Head of caudate nucleus (tissue), 42 donors: ENCODE measurements at regions of chr13 and their contacts with region 1.

Region 1: DNA sequence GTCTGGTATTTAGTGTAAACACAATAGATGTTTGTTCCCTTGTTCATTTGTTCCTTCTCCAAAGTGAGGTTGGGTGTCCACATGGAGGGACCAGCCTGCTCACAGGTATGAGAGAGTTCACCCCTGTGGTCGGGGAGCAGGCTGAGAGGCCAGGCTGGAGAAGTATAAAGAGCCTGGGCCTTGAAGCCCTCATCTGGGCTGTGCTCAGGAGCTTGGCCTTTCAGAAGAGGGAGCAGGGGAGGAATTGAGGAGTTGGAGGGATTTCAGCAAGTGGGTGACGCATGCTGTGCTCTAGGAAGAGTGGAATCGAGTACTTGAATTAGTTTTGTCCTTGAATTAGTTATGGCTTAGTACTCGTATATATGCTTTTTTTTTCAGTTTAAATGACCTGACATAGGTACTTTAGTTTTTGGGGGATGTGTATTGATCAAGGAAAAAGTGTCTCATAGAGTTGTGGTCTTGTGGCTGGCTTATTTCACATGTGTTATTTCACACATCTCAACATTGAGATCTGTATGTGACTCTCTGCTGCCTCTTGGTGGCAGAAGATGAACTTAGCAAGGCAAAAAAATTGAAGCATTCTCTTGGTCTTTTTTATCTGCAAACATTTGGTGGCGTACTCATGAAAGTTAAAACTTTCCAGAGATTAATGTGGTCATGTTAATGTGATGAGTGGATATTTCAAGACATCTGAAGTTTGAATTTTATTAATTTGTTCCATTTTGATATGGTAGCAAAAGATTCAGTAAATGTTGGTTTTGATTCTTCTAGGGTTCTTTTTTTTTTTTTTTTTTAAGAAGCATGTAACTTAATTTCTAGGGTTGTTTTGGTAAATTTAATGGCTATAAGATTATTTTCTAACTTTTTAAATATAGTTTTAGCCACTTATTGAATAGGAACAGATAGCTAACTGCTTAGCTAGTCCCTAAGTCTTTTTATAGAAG is 54.3 kb downstream of the SLAIN1 start:
- DNase-seq: peak in 23 of 42 donors; percentile 41 to 86 (median 63)

Region 2: DNA sequence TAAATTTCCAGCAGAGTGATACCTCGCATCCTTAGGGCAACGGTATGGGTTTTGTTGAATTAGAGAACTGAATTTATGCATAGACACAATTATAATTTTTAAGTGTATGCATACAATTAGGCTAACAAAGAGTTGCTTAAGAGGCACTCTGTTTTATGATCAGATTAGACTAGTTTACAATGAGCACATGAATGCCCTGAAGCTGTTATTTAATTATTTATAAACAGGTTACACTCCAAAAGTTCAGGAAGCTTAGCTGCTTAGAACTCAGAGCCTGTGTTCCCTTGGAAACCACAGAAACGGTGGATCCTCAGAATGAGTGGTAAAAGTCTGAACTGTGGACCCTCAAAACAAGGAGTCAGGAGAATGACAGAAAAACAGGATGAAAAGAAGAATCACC is 652.4 kb before region 1 on chr13:
- intact Hi-C with region 1: no loop called
- DNase-seq: no peak

Region 3: DNA sequence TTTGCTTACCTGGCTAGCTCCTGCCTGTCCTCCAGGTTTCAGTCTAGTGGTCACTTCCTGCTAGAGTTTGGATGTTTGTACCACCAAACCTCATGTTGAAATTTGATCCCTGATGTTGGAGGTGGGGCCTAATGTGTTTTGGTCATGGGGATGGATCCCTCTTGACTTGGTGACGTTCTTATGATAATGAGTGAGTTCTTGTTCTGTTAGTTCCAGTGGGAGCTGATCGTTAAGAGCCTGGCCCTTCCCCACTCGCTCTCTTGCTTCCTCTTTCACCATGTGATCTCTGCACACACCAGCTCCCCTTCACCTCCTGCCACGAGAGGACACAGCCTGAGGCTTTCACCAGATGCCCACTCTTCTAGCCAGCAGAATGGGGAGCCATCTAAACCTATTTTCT is 303.1 kb before region 1 on chr13:
- intact Hi-C with region 1: no loop called
- DNase-seq: peak in 24 of 42 donors; percentile 3 to 45 (median 14)

Region 4: DNA sequence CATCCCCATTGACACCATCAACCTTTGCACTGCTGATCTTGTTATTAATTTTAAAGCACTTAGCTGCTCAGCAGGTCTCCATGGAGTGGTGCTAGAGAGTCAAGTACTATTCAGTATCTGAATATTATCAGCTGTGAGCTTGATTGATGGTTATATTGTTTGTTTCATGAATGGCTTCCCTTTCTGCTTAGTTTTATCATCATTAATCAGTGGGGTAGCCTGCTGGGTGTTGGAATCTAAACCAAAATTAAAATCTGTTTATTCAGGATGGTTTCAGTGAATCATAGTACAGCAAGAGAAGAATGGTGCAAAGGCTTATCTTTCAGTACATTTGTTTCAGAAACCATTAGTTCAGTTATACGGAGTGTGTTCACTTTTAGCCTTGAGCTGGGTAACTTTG is 258.8 kb before region 1 on chr13:
- intact Hi-C with region 1: loop called (anchors 10 kb)
- DNase-seq: peak in 22 of 42 donors; percentile 9 to 72 (median 38)

Region 5: DNA sequence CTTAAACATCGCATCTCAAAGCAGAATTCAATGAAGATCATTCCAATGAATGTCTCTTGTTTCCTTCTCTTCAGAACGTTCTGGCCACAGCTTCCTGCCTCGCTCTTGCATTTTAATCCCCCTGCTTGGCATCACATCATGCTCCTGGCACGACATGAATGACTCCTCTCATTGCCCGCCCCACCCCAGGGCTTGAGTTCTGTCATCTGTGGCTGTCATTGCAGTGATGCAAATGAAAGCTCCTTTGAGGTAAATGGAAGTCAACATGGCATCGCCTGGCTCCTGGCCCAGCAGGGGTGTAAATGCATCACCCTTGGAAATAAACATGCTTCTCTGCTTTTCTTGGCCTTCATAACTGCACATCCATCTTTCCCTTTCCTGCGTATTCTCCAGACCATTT is 167.7 kb before region 1 on chr13:
- intact Hi-C with region 1: loop called (anchors 5 kb)
- DNase-seq: peak; percentile 76 to 95 (median 88)